ENCODE measurements at regions of chr2 and their contacts with region 1.

Region 1: DNA sequence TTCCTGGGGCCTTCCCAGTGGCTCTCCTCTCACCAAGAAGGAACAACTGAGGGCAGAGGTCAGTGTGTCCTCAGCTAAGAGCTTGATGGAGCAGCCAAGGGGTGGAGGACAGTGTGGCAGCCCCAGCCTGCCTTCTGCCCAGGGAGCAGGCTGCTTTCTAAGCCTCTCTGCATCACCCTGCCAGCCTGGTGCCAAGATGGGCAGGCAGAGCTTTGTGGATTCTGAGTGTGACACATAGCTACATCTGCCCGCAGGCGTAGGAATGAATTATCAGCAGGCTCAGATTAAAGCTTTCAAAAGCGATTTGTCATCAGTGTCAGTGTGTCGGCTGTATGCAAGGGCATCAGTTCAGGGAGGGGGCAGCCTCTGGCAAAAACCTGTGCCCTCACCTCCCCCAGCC is 8.7 kb downstream of the MAL start:
- DNase-seq: peak in 1 of 14 experiments; percentile 21
- ATAC-seq: no peak
- H3K4me3 ChIP-seq: no peak overlapping the region
- H3K4me3 Mint-ChIP-seq: no peak overlapping the region
- H3K27ac ChIP-seq: no peak overlapping the region
- H3K27ac Mint-ChIP-seq: peak overlapping the region; percentile 71
- H3K4me1 ChIP-seq: peaks cover 93% of the 10 kb centered on the region
- H3K4me1 Mint-ChIP-seq: peaks cover 95% of the 10 kb centered on the region
- H3K27me3 ChIP-seq: no peaks in the 10 kb centered on the region
- H3K27me3 Mint-ChIP-seq: no peaks in the 10 kb centered on the region
- CTCF ChIP-seq: no peak

Region 2: GRCh38 chr2:95007822-95008221 is 26.4 kb before region 1 on chr2:
- CTCF ChIA-PET with region 1: no interaction called
- POLR2A ChIA-PET with region 1: no interaction called
- intact Hi-C with region 1: no loop called
- DNase-seq: no peak
- ATAC-seq: no peak
- H3K4me3 ChIP-seq: no peak overlapping the region
- H3K4me3 Mint-ChIP-seq: no peak overlapping the region
- H3K27ac ChIP-seq: no peak overlapping the region
- H3K27ac Mint-ChIP-seq: no peak overlapping the region
- H3K4me1 ChIP-seq: no peaks in the 10 kb centered on the region
- H3K4me1 Mint-ChIP-seq: no peaks in the 10 kb centered on the region
- H3K27me3 ChIP-seq: peaks cover 0 to 3% of the 10 kb centered on the region in 2 experiments
- H3K27me3 Mint-ChIP-seq: peaks cover 11% of the 10 kb centered on the region
- CTCF ChIP-seq: no peak

Region 3: DNA sequence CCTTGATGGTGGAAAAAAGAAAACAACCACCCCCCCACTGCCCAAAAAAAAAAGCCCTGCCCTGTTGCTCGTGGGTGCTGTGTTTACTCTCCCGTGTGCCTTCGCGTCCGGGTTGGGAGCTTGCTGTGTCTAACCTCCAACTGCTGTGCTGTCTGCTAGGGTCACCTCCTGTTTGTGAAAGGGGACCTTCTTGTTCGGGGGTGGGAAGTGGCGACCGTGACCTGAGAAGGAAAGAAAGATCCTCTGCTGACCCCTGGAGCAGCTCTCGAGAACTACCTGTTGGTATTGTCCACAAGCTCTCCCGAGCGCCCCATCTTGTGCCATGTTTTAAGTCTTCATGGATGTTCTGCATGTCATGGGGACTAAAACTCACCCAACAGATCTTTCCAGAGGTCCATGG is 19.3 kb after region 1 on chr2:
- CTCF ChIA-PET with region 1: no interaction called
- POLR2A ChIA-PET with region 1: interaction called, 4 read pairs
- intact Hi-C with region 1: loop called in 1 of 2 experiments (anchors 2 kb)
- DNase-seq: peak in 3 of 14 experiments; percentile 23 to 45 (median 42)
- ATAC-seq: peak; percentile 11
- H3K4me3 ChIP-seq: no peak overlapping the region
- H3K4me3 Mint-ChIP-seq: peak overlapping the region; percentile 2
- H3K27ac ChIP-seq: no peak overlapping the region
- H3K27ac Mint-ChIP-seq: peak overlapping the region; percentile 83
- H3K4me1 ChIP-seq: peaks cover 75% of the 10 kb centered on the region
- H3K4me1 Mint-ChIP-seq: peaks cover 85% of the 10 kb centered on the region
- H3K27me3 ChIP-seq: no peaks in the 10 kb centered on the region
- H3K27me3 Mint-ChIP-seq: no peaks in the 10 kb centered on the region
- CTCF ChIP-seq: no peak

Region 4: DNA sequence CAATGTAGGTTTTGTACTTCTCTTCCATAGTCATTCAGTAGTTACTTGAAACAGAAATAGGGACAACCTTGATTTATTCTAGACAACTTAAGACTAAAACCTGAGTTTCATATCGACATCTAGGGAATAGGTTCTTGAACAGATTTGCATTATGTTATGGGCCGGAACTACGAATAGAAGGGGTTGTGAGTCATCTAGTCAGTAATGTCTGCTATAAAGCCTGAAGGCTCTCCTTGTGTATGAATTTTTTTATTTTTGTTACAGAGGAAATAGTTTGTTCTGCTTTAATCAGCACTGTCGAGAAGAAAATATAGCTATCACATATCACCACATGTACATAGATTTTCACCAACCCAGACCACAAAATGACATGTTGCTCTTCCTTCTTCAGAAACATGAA is 540.3 kb after region 1 on chr2:
- CTCF ChIA-PET with region 1: no interaction called
- POLR2A ChIA-PET with region 1: no interaction called
- intact Hi-C with region 1: no loop called
- DNase-seq: no peak
- ATAC-seq: no peak
- H3K4me3 ChIP-seq: no peak overlapping the region
- H3K4me3 Mint-ChIP-seq: no peak overlapping the region
- H3K27ac ChIP-seq: no peak overlapping the region
- H3K27ac Mint-ChIP-seq: no peak overlapping the region
- H3K4me1 ChIP-seq: no peaks in the 10 kb centered on the region
- H3K4me1 Mint-ChIP-seq: no peaks in the 10 kb centered on the region
- H3K27me3 ChIP-seq: peaks cover 4 to 7% of the 10 kb centered on the region in 2 experiments
- H3K27me3 Mint-ChIP-seq: peaks cover 23% of the 10 kb centered on the region
- CTCF ChIP-seq: no peak

Region 5: DNA sequence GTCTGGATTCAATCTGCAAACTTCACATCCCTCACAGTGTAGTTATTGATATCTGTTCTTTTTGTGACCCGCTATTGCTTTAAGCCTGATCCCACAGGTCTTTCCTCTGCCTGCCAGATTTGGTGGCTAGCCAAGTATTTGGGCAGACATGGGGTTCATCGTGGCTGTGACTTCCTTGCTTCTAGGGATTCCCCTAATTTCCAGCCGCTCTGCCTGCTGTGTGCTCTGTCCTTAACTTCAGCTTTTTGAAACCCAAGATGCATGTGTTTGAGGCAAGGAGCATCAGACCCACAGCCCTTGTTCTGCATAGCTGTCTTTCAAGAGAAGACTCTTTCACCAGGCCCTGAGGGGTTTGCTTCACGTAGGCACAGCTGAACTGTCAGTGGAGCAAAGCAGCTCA is 1355.5 kb after region 1 on chr2:
- CTCF ChIA-PET with region 1: no interaction called
- POLR2A ChIA-PET with region 1: no interaction called
- intact Hi-C with region 1: no loop called
- DNase-seq: peak in 3 of 14 experiments; percentile 39 to 49 (median 44)
- ATAC-seq: peak; percentile 63
- H3K4me3 ChIP-seq: no peak overlapping the region
- H3K4me3 Mint-ChIP-seq: no peak overlapping the region
- H3K27ac ChIP-seq: no peak overlapping the region
- H3K27ac Mint-ChIP-seq: no peak overlapping the region
- H3K4me1 ChIP-seq: peaks cover 7% of the 10 kb centered on the region
- H3K4me1 Mint-ChIP-seq: peaks cover 7% of the 10 kb centered on the region
- H3K27me3 ChIP-seq: no peaks in the 10 kb centered on the region
- H3K27me3 Mint-ChIP-seq: no peaks in the 10 kb centered on the region
- CTCF ChIP-seq: no peak

Measured in CD4-positive, alpha-beta T cell (primary cell).